ENCODE measurements at regions of chr20 and their contacts with region 1.

Region 1: DNA sequence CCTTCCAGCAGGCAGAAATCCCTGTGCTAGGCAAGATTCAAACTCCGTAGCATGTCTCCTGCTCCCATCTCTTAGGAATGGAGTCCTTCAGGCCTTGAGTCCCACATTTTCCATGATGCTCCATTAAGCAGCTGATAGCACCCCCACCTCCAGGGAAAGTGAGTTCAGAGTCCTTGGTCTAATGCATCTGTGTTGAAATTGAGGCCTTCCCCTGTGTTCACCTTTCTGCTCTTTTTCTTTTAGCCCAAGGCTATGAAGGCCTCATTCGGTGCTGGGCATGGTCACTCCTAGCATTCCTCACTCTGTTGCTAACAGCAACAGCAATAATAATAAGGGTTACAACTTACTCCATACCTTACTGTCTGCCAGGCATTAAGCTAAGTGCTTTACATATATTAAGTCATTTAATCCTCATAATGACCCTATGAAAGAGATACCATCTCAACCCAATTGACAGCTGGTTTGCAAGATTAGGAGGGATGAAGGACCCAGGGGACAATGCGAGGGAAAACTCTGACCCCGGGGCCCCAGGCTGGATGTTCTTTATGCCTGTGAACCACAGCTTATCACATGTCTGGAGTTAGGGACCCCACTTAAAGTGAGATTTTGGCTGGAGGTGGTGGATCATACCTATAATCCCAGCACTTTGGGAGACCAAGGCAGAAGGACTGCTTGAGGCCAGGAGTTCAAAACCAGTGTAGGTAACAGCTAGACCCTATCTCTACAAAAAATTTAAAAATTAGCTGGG is 17.5 kb upstream of the PANK2 start:
- DNase-seq: no peak
- ATAC-seq: no peak

Region 2: DNA sequence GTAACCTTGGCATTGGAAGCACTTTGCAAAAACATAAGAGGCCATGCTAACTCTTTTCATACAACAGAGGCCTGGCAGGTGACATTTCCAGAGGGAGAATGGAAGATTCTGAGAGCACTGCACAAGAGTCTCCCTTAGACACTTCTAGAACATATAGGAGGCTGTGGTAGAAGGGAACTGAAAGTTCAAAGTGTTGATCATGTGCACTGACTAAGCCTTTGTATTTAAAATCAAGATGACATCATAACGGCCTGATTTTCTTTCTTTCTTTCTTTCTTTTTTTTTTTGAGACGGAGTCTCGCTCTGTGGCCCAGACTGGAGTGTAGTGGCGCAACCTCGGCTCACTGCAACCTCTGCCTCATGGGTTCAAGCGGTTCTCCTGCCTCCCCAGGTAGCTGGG is 437.5 kb before region 1 on chr20:
- intact Hi-C with region 1: no loop called
- DNase-seq: no peak
- ATAC-seq: no peak

Region 3: GRCh38 chr20:3932681-3933080 is 61.0 kb after region 1 on chr20:
- intact Hi-C with region 1: loop called in 1 of 2 experiments (anchors 10 kb)
- DNase-seq: no peak
- ATAC-seq: peak; percentile 64